Lower leg skin (tissue), 4 donors: ENCODE measurements at regions of chr14 and their contacts with region 1.

Region 1: GRCh38 chr14:77301103-77301502 is 19.6 kb downstream of the POMT2 start:
- DNase-seq: peak; percentile 79 to 94
- H3K4me3 ChIP-seq: no peak overlapping the region
- CTCF ChIP-seq: peak in 1 of 3 donors; percentile 71
- POLR2A ChIP-seq: no peak

Region 2: GRCh38 chr14:76876076-76876475 is 425.0 kb before region 1 on chr14:
- intact Hi-C with region 1: loop called (anchors 10 kb)
- DNase-seq: peak in 1 of 2 donors; percentile 56
- H3K4me3 ChIP-seq: no peak overlapping the region
- CTCF ChIP-seq: peak in 1 of 3 donors; percentile 92
- POLR2A ChIP-seq: no peak